Breast epithelium (tissue), 4 donors: ENCODE measurements at regions of chr11 and their contacts with region 1.

Region 1: GRCh38 chr11:35541621-35542375 is 16.4 kb upstream of the PAMR1 start:
- DNase-seq: peak in 1 of 2 donors; percentile 61
- H3K4me3 ChIP-seq: no peak overlapping the region
- H3K27ac ChIP-seq: peak overlapping the region; percentile 69 to 84
- H3K4me1 ChIP-seq: no peaks in the 10 kb centered on the region
- H3K27me3 ChIP-seq: no peaks in the 10 kb centered on the region
- CTCF ChIP-seq: no peak
- POLR2A ChIP-seq: no peak

Region 2: GRCh38 chr11:35470616-35471015 is 71.2 kb before region 1 on chr11:
- intact Hi-C with region 1: loop called (anchors 2 kb)
- DNase-seq: no peak
- H3K4me3 ChIP-seq: no peak overlapping the region
- H3K27ac ChIP-seq: no peak overlapping the region
- H3K4me1 ChIP-seq: no peaks in the 10 kb centered on the region
- H3K27me3 ChIP-seq: no peaks in the 10 kb centered on the region
- CTCF ChIP-seq: no peak
- POLR2A ChIP-seq: no peak